Esophagus muscularis mucosa (tissue), 4 donors: ENCODE measurements at regions of chr11 and their contacts with region 1.

Region 1: GRCh38 chr11:86477495-86478155 is 102.9 kb downstream of the CCDC81 start:
- DNase-seq: no peak
- H3K4me3 ChIP-seq: no peak overlapping the region
- H3K27ac ChIP-seq: peak overlapping the region in 3 of 4 donors; percentile 4 to 47 (median 32)
- H3K4me1 ChIP-seq: peaks cover 47 to 56% (median 53%) of the 10 kb centered on the region in 4 donors
- H3K27me3 ChIP-seq: no peaks in the 10 kb centered on the region
- CTCF ChIP-seq: no peak
- EP300 ChIP-seq: no peak
- POLR2A ChIP-seq: no peak

Region 2: GRCh38 chr11:86523738-86524619 is 46.4 kb after region 1 on chr11:
- intact Hi-C with region 1: no loop called
- DNase-seq: no peak
- H3K4me3 ChIP-seq: no peak overlapping the region
- H3K27ac ChIP-seq: peak overlapping the region; percentile 57 to 72 (median 60)
- H3K4me1 ChIP-seq: peaks cover 26 to 39% (median 38%) of the 10 kb centered on the region in 4 donors
- H3K27me3 ChIP-seq: no peaks in the 10 kb centered on the region
- CTCF ChIP-seq: no peak
- EP300 ChIP-seq: no peak
- POLR2A ChIP-seq: no peak

Region 3: GRCh38 chr11:86548271-86548917 is 70.8 kb after region 1 on chr11:
- intact Hi-C with region 1: loop called (anchors 5 kb)
- DNase-seq: no peak
- H3K4me3 ChIP-seq: no peak overlapping the region
- H3K27ac ChIP-seq: peak overlapping the region; percentile 74 to 84 (median 78)
- H3K4me1 ChIP-seq: peaks cover 39 to 72% (median 55%) of the 10 kb centered on the region in 4 donors
- H3K27me3 ChIP-seq: no peaks in the 10 kb centered on the region
- CTCF ChIP-seq: no peak
- EP300 ChIP-seq: no peak
- POLR2A ChIP-seq: no peak